ENCODE measurements at regions of chr11 and their contacts with region 1.

Region 1: DNA sequence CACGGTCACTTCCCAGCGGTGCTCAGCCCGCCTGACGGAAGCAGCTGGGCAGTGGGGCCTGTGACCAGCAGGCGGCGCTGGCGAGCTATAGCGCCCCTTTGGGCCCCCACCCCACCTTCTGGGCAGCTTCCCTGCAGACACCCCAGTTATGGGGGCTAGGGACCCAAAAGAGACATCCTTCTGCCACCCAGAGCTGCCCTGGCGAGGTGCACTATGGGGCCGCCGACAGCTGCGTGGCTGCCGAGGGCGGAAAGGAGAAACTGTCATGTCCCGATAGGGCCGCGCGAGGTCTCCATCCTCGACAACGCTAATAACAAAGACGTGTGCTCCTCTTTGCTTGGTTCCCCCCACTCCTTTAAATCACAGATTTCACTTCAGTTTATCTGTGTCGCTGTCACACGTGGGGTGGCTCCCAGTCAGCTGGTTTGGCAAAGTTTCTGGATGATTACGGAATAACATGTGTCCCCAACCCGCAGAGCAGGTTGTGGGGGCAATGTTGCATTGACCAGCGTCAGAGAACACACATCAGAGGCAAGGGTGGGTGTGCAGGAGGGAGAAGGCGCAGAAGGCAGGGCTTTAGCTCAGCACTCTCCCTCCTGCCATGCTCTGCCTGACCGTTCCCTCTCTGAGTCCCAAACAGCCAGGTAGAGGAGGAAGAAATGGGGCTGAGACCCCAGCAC is 674 bp upstream of the MYO7A start:
- DNase-seq: peak; percentile 64
- ATAC-seq: peak; percentile 87
- H3K4me3 Mint-ChIP-seq: no peak overlapping the region
- H3K27ac Mint-ChIP-seq: no peak overlapping the region
- H3K4me1 Mint-ChIP-seq: peaks cover 3% of the 10 kb centered on the region
- H3K27me3 Mint-ChIP-seq: peaks cover 13% of the 10 kb centered on the region

Region 2: GRCh38 chr11:77047007-77047927 is 80.1 kb before region 1 on chr11:
- CTCF ChIA-PET with region 1: interaction called, 12 read pairs
- DNase-seq: peak; percentile 88
- ATAC-seq: peak; percentile 91
- H3K4me3 Mint-ChIP-seq: peak overlapping the region; percentile 64
- H3K27ac Mint-ChIP-seq: peak overlapping the region; percentile 3
- H3K4me1 Mint-ChIP-seq: peaks cover 10% of the 10 kb centered on the region
- H3K27me3 Mint-ChIP-seq: peaks cover 27% of the 10 kb centered on the region

Region 3: GRCh38 chr11:77113382-77114088 is 13.8 kb before region 1 on chr11:
- CTCF ChIA-PET with region 1: interaction called, 21 read pairs
- DNase-seq: no peak
- ATAC-seq: no peak
- H3K4me3 Mint-ChIP-seq: no peak overlapping the region
- H3K27ac Mint-ChIP-seq: no peak overlapping the region
- H3K4me1 Mint-ChIP-seq: peaks cover 2% of the 10 kb centered on the region
- H3K27me3 Mint-ChIP-seq: no peaks in the 10 kb centered on the region

Region 4: GRCh38 chr11:77147668-77148321 is 20.4 kb after region 1 on chr11:
- CTCF ChIA-PET with region 1: interaction called, 44 read pairs
- DNase-seq: peak; percentile 73
- ATAC-seq: peak; percentile 61
- H3K4me3 Mint-ChIP-seq: peak overlapping the region; percentile 30
- H3K27ac Mint-ChIP-seq: no peak overlapping the region
- H3K4me1 Mint-ChIP-seq: peaks cover 41% of the 10 kb centered on the region
- H3K27me3 Mint-ChIP-seq: peaks cover 45% of the 10 kb centered on the region

Region 5: GRCh38 chr11:77167111-77167626 is 39.8 kb after region 1 on chr11:
- CTCF ChIA-PET with region 1: interaction called, 19 read pairs
- DNase-seq: no peak
- ATAC-seq: no peak
- H3K4me3 Mint-ChIP-seq: no peak overlapping the region
- H3K27ac Mint-ChIP-seq: no peak overlapping the region
- H3K4me1 Mint-ChIP-seq: peaks cover 5% of the 10 kb centered on the region
- H3K27me3 Mint-ChIP-seq: peaks cover 4% of the 10 kb centered on the region

Region 6: DNA sequence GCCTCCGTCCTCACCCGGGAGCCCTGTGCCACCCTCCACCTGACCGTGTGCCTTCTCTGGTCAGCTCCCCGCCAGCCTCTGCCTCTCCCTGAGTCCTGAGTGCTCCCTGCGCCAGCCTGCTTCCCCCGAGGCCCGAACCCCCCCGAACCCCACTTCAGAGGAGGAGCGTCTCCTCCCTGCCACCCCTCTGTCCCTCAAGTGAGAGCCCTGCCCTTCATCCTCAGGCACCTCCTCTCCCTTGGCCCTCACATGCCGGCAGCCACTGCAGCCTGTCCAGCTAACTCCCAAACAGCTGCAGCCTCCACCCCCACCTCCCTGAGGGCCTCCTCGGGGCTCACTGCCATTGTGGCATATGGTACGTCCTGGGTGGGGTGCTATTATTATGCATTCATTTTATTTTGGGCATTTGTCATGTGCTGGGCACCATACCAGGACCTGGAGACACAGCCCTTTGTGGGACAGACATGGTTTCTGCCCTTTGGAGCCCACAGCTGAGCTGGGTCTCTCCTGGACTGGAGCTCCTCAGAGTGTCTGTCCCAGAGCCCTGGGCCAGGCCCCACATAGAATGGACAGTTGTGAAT is 67.9 kb after region 1 on chr11:
- CTCF ChIA-PET with region 1: interaction called, 162 read pairs
- DNase-seq: no peak
- ATAC-seq: no peak
- H3K4me3 Mint-ChIP-seq: no peak overlapping the region
- H3K27ac Mint-ChIP-seq: no peak overlapping the region
- H3K4me1 Mint-ChIP-seq: no peaks in the 10 kb centered on the region
- H3K27me3 Mint-ChIP-seq: no peaks in the 10 kb centered on the region

Region 7: DNA sequence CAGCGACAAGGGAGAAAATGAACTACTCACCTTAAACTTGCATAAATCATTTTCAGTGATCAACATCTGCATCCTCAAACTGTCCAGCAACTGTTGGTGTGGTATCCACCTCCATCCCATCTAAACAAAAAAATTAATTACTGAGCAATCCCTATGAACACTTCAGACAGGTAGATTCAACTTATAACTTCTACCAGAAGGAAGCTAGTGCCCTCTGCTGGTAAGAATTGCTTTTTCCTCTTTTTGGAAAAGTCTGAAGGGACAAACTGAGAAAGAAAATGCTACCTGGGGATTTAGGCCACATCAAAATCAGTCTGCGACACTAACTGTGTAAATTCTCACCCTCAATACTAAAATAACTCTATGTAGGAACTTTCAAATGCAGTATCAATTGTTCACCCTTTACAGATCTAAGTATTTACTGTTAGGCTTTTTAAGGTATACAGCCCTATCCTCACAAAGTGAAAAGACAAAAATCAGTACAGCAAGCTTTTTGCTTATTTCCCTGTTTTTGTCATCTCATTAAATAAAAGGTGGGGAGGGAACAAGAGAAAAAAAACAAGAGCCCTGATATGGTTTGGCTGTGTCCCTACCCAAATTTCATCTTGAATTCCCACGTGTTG is 492.3 kb after region 1 on chr11:
- CTCF ChIA-PET with region 1: interaction called, 11 read pairs
- DNase-seq: no peak
- ATAC-seq: peak; percentile 45
- H3K4me3 Mint-ChIP-seq: no peak overlapping the region
- H3K27ac Mint-ChIP-seq: no peak overlapping the region
- H3K4me1 Mint-ChIP-seq: no peaks in the 10 kb centered on the region
- H3K27me3 Mint-ChIP-seq: no peaks in the 10 kb centered on the region